Caco-2 (cell line): ENCODE measurements at regions of chr1 and their contacts with region 1.

Region 1: DNA sequence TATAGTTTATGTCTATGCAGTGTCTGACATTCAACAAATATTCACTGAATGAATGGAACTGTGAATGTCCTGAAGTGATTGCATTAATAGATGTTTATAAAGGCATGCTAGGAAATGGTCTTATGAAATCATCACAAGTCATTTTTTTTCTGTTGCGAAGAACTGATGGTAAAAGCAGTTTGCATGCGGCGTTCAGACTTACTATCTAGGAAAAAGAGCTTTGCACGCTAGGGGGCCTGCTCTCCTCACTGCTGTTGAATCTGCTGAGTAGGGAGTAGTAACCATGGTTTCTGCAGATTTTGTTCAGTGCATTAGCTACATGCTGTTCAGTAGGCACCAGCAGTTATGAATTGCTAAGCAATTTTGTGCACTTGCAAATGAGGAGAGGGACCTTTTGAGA is 57.9 kb downstream of the CENPF start:
- DNase-seq: peak; percentile 43 to 66
- H3K4me3 ChIP-seq: no peak overlapping the region
- H3K4me3 Mint-ChIP-seq: no peak overlapping the region
- H3K27ac Mint-ChIP-seq: no peak overlapping the region
- H3K4me1 ChIP-seq: no peaks in the 10 kb centered on the region
- H3K4me1 Mint-ChIP-seq: peaks cover 7% of the 10 kb centered on the region
- H3K27me3 ChIP-seq: no peaks in the 10 kb centered on the region
- H3K27me3 Mint-ChIP-seq: no peaks in the 10 kb centered on the region
- CTCF ChIP-seq: peak; percentile 56 to 75

Region 2: DNA sequence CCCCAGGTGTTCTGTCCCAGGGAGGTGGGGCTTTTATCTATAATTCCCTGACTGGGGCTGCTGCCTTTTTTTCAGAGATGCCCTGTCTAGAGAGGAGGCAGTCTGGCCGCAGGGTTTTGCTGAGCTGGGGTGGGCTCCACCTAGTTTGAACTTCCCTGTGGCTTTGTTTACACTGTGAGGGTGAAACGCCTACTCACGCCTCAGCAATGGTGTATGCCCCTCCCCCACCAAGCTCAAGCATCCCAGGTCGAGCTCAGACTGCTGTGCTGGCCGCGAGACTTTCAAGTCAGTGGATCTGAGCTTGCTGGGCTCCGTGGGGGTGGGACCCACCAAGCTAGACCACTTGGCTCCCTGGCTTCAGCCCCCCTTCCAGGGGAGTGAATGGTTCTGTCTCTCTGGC is 66.4 kb after region 1 on chr1:
- CTCF ChIA-PET with region 1: no interaction called
- POLR2A ChIA-PET with region 1: no interaction called
- intact Hi-C with region 1: loop called (anchors 5 kb)
- DNase-seq: no peak
- H3K4me3 ChIP-seq: no peak overlapping the region
- H3K4me3 Mint-ChIP-seq: no peak overlapping the region
- H3K27ac Mint-ChIP-seq: no peak overlapping the region
- H3K4me1 ChIP-seq: no peaks in the 10 kb centered on the region
- H3K4me1 Mint-ChIP-seq: no peaks in the 10 kb centered on the region
- H3K27me3 ChIP-seq: no peaks in the 10 kb centered on the region
- H3K27me3 Mint-ChIP-seq: no peaks in the 10 kb centered on the region
- CTCF ChIP-seq: no peak

Region 3: DNA sequence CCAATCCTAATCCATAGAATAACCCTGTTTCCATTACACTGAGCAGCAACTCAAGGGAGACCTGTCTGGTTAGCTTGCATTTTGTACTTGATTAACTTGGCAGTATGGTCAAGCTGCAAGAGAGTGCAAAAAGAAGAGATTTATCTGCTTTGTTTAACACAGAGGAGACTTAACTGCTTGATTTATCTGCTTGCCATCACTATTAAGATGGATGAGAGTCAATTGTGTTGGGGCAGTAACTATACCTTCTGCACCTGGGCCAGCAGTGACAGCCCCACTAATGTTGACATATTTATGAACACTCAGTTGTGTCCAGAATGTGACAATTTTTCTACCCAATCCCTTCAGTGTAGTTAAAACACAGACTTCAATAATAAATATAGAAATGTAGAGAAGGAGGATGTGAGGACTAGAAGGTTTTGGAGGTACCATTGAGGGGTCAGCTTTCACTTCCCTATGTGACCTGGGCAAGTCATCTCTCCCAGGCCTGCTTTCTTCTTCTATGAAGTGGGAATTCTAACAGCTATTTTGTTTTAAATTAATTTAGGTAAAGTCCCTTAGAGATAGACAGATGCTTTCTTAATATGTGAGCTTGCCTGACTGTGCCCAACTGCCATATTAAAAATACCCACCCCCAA is 262.5 kb after region 1 on chr1:
- CTCF ChIA-PET with region 1: no interaction called
- POLR2A ChIA-PET with region 1: no interaction called
- intact Hi-C with region 1: loop called (anchors 10 kb)
- DNase-seq: no peak
- H3K4me3 ChIP-seq: no peak overlapping the region
- H3K4me3 Mint-ChIP-seq: no peak overlapping the region
- H3K27ac Mint-ChIP-seq: no peak overlapping the region
- H3K4me1 ChIP-seq: no peaks in the 10 kb centered on the region
- H3K4me1 Mint-ChIP-seq: peaks cover 10% of the 10 kb centered on the region
- H3K27me3 ChIP-seq: no peaks in the 10 kb centered on the region
- H3K27me3 Mint-ChIP-seq: no peaks in the 10 kb centered on the region
- CTCF ChIP-seq: no peak

Region 4: GRCh38 chr1:215076318-215076717 is 415.5 kb after region 1 on chr1:
- CTCF ChIA-PET with region 1: interaction called, 8 read pairs
- POLR2A ChIA-PET with region 1: no interaction called
- intact Hi-C with region 1: loop called (anchors 2 kb)
- DNase-seq: peak; percentile 46 to 56
- H3K4me3 ChIP-seq: no peak overlapping the region
- H3K4me3 Mint-ChIP-seq: no peak overlapping the region
- H3K27ac Mint-ChIP-seq: no peak overlapping the region
- H3K4me1 ChIP-seq: no peaks in the 10 kb centered on the region
- H3K4me1 Mint-ChIP-seq: no peaks in the 10 kb centered on the region
- H3K27me3 ChIP-seq: no peaks in the 10 kb centered on the region
- H3K27me3 Mint-ChIP-seq: peaks cover 11% of the 10 kb centered on the region
- CTCF ChIP-seq: peak in 1 of 2 experiments; percentile 46

Region 5: DNA sequence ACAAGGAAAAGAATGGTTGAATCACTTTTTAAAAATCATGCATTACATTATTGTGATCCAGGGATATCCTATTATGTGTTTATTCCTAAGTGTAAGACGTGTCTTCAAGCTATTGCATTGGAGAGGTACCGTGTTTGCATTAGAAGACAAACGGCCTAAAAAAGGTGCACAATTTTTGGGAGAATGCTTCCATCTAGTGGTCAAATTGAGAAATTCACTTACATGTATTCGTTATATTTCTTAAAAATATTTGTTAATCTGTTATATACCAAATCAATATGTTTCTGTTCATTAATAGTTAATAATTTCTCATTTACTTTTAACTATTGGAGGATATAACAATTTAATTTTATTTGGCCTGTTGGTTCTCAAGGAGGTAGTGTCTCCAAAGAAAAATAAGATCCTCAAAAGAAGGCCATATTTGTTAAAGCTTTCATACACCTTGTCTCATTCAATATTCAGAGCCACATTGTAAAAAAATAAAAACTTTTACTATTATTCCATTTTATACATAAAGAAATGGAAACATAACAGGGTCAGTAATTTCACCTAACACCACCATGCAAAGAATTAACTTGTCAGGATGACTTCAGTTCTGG is 865.8 kb after region 1 on chr1:
- CTCF ChIA-PET with region 1: interaction called, 3 read pairs
- POLR2A ChIA-PET with region 1: no interaction called
- intact Hi-C with region 1: loop called (anchors 1 kb)
- DNase-seq: peak in 1 of 2 experiments; percentile 29
- H3K4me3 ChIP-seq: no peak overlapping the region
- H3K4me3 Mint-ChIP-seq: no peak overlapping the region
- H3K27ac Mint-ChIP-seq: no peak overlapping the region
- H3K4me1 ChIP-seq: peaks cover 7% of the 10 kb centered on the region; the same call in 1 of the 2 replicates
- H3K4me1 Mint-ChIP-seq: no peaks in the 10 kb centered on the region
- H3K27me3 ChIP-seq: no peaks in the 10 kb centered on the region
- H3K27me3 Mint-ChIP-seq: no peaks in the 10 kb centered on the region
- CTCF ChIP-seq: peak; percentile 51 to 73